HEK293 (cell line): ENCODE measurements at regions of chr19 and their contacts with region 1.

Region 1: DNA sequence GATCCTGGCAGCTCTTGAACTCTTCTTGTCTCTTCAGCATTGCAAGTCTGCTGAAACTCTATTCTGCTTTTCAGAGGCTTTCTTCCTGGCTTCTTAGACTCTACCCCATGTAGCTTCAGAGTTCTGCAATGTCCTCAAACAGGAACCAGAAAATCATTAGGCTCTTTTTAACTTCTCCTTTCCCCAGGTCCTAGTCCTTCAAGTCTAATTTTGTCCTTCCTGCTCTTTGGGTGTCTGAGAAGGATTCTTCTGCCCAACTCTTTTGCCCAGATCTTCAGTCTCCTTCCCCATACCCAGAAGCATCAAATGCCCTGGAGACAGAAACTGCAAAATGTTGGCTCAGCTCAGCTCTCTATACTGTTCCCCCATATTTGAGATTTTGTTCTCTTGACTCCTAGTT is 50.0 kb upstream of the CALM3 start:
- H3K4me3 ChIP-seq: no peak overlapping the region
- H3K27ac ChIP-seq: no peak overlapping the region
- H3K4me1 ChIP-seq: no peaks in the 10 kb centered on the region; the same call in 1 of the 2 replicates
- CTCF ChIP-seq: no peak

Region 2: DNA sequence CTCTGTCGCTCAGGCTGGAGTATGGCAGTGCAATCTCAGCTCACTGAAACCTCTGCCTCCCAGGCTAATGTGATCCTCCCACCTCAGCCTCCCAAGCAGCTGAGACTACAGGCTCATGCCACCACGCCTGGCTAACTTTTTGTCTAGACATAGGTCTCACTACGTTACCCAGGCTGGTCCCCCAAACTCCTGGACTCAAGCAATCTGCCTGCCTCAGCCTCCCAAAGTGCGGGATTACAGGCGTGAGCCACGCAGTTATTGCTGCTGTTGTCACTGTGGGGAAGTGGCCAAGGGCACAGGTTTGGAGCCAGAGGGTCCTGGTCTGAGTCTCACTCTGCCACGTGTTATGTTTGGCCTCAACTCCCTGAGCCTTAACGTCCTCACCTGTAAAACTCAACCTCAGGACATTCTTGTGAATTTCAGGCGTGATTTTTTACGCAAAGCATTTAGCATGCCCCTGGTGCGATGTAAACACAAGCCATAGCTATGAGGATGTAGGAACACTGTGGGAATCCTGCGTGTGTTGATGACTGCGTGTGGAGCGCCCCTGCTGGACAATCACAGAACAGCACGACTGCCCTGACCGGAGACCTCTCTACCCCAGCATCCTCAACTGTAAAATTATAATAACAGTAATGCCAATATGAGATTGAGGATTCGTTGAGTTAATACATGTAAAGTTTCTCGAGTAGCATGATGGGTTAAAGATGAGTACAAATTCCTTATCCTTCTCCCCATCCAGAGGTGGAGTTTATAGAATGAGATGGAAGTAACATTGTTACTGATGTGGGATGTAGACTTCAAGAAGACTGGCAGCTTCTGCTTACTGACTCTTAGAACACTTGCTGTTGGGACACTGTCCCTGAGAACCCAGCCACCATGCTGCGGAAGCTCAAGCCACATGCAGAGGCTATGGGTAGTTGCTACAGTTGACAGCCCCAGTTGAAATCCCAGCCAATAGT is 13.7 kb before region 1 on chr19:
- CTCF ChIA-PET with region 1: interaction called, 33 read pairs
- POLR2A ChIA-PET with region 1: no interaction called
- H3K4me3 ChIP-seq: no peak overlapping the region
- H3K27ac ChIP-seq: no peak overlapping the region
- H3K4me1 ChIP-seq: no peaks in the 10 kb centered on the region
- CTCF ChIP-seq: peak; percentile 62